Activated CD4-positive, alpha-beta memory T cell treated with anti-CD3 and anti-CD28 coated beads, Interleukin-2, amount 10 ng/mL, durations not matched to agents 7 days and 5 days (primary cell): ENCODE measurements at regions of chr4 and their contacts with region 1.

Region 1: GRCh38 chr4:2934813-2935761 is 28.1 kb downstream of the NOP14 start:
- DNase-seq: peak; percentile 96
- H3K4me3 Mint-ChIP-seq: peak overlapping the region; percentile 88
- H3K27ac Mint-ChIP-seq: peak overlapping the region; percentile 98
- H3K4me1 Mint-ChIP-seq: peaks cover 63% of the 10 kb centered on the region
- H3K27me3 Mint-ChIP-seq: no peaks in the 10 kb centered on the region

Region 2: DNA sequence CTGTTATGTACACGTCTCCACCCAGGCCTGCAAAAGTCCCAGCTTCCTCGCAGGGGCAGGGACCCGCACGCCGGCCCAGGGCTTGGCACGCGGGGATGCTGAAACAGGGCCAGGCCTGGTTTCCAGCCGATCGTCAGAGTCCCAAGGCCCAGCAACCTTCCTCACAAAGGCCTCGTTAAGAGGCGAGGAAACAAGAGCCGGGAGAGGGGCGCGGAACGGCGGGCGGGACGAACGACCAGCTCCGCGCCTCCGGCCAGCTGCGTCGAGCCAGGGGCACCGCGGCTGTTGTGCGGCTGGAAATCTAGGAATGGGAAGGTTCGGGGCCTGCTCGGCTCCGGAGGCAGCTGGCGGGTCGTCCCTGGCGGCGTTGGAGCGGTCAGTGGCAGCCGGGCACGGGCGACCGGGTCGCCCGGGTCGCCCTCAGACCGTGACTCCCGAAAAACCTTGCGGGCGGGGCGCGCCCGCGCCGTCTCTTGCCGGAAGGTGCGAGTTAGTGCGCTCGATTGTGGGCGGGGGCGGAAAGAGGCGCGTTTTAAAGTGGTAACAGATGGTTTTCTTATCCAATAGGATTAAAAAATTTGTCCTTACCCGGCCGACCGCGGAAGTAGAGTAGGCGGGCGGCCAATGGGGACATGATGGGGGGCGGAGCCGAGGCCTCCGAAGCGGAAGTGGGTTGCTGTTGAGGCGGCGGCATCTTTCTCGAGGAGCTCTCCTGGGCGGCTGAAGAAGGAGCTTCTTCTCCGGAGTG is 466.5 kb before region 1 on chr4 and contains the start of gene RNF4:
- CTCF ChIA-PET with region 1: no interaction called
- POLR2A ChIA-PET with region 1: interaction called, 11 read pairs
- DNase-seq: peak; percentile 97
- H3K4me3 Mint-ChIP-seq: peak within 1 kb of the TSS; percentile 97
- H3K27ac Mint-ChIP-seq: peak within 1 kb of the TSS; percentile 98
- H3K4me1 Mint-ChIP-seq: peaks cover 52% of the 10 kb centered on the region
- H3K27me3 Mint-ChIP-seq: peaks cover 2% of the 10 kb centered on the region
- total RNA-seq, gene RNF4: 106 to 113 TPM

Region 3: DNA sequence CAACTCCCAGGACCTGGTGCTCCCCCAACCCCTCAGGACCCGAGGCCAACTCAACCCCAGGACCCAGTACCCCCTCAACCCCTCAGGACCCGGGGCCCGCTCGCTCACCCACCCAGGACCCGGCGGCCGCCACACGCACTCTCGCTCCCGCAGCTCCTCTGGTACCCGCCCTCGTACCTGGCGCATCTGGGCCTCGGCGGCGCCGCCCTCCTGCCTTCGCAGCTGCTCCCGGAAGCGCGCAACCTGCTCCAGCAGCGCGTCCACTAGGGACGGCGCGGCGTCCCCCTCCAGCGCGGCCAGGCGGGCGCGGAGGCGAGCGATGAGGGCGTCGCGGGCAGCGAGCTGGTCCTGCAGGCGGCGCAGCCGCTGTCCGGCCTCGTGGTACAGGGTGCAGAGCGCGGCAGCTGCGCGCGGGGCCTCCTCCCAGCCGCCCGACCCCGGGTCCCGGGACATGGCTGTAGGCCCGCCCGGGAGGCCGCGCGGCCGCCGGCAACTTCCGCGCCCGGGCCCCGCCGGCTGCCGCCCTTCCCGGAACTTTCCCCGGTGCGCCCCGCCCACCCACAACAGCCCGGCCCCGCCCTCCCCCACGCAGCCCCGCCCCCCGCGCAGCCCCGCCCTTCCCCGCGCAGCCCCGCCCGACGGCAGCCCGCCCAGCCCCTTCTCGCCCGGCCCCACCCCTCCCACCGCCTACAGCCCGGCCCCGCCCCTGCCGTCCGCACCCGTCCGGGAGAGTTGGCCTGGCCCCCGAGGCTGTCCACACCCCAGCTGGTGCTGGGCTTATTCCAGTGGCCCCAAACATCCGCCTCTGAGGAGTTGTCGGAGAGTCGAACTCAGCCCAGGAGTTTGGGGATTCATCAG is 179.0 kb before region 1 on chr4 and contains the start of gene TNIP2:
- CTCF ChIA-PET with region 1: interaction called, 3 read pairs
- POLR2A ChIA-PET with region 1: interaction called, 30 read pairs
- DNase-seq: peak; percentile 82
- H3K4me3 Mint-ChIP-seq: peak within 1 kb of the TSS; percentile 79
- H3K27ac Mint-ChIP-seq: peak within 1 kb of the TSS; percentile 72
- H3K4me1 Mint-ChIP-seq: peaks cover 32% of the 10 kb centered on the region
- H3K27me3 Mint-ChIP-seq: no peaks in the 10 kb centered on the region
- total RNA-seq, gene TNIP2: 56.1 to 58.4 TPM

Region 4: GRCh38 chr4:2800691-2801596 is 134.1 kb before region 1 on chr4:
- CTCF ChIA-PET with region 1: interaction called, 4 read pairs
- POLR2A ChIA-PET with region 1: interaction called, 25 read pairs
- DNase-seq: no peak
- H3K4me3 Mint-ChIP-seq: peak overlapping the region; percentile 65
- H3K27ac Mint-ChIP-seq: no peak overlapping the region
- H3K4me1 Mint-ChIP-seq: peaks cover 50% of the 10 kb centered on the region
- H3K27me3 Mint-ChIP-seq: no peaks in the 10 kb centered on the region

Region 5: DNA sequence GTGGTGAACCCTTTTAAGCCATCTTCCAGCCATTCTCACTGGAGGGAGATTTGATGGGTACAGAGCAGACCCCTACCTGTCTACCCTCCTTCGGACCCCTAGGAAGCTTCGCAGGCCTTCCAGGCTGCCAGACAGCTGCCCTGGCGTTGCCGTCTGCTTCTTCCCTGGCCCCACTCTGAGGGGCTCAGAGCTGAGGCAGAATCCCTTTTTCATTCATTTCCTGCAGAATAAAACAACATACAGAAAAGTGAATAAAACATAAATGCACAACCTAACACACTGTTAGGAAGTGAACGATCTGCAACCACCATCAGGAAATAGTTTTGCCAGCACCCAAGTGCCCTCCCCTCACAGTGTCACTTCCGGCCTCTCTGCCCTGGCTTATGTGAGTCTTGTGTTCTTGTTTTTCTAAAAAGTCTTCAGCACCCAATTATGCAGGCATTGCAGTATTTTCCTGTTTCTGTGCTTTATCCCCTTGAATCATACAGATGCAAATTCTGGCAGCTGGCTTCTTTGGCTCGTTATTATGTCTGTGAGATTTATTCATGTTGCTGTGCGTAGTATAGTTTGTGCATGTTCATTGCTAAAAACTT is 97.1 kb before region 1 on chr4:
- CTCF ChIA-PET with region 1: interaction called, 4 read pairs
- POLR2A ChIA-PET with region 1: interaction called, 35 read pairs
- DNase-seq: peak; percentile 84
- H3K4me3 Mint-ChIP-seq: peak overlapping the region; percentile 75
- H3K27ac Mint-ChIP-seq: peak overlapping the region; percentile 93
- H3K4me1 Mint-ChIP-seq: peaks cover 75% of the 10 kb centered on the region
- H3K27me3 Mint-ChIP-seq: no peaks in the 10 kb centered on the region

Region 6: DNA sequence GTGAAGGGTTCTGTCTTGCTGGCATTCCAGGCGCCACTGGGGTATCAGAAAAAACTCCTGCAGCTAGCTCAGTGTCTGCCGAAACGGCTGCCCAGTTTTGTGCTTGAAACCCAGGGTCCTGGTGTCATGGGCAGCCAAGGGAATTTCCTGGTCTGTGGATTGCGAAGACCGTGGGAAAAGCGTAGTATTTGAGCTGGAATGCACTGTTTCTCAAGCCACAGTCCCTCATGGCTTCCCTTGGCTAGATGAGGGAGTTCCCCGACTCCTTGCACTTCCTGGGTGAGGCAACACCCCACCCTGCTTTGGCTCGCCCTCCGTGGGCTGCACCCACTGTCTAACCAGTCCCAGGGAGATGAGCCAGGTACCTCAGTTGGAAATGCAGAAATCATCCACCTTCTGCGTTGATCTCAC is 11.9 kb before region 1 on chr4:
- CTCF ChIA-PET with region 1: interaction called, 5 read pairs
- POLR2A ChIA-PET with region 1: interaction called, 22 read pairs
- DNase-seq: no peak
- H3K4me3 Mint-ChIP-seq: no peak overlapping the region
- H3K27ac Mint-ChIP-seq: peak overlapping the region; percentile 75
- H3K4me1 Mint-ChIP-seq: peaks cover 37% of the 10 kb centered on the region
- H3K27me3 Mint-ChIP-seq: no peaks in the 10 kb centered on the region

Region 7: DNA sequence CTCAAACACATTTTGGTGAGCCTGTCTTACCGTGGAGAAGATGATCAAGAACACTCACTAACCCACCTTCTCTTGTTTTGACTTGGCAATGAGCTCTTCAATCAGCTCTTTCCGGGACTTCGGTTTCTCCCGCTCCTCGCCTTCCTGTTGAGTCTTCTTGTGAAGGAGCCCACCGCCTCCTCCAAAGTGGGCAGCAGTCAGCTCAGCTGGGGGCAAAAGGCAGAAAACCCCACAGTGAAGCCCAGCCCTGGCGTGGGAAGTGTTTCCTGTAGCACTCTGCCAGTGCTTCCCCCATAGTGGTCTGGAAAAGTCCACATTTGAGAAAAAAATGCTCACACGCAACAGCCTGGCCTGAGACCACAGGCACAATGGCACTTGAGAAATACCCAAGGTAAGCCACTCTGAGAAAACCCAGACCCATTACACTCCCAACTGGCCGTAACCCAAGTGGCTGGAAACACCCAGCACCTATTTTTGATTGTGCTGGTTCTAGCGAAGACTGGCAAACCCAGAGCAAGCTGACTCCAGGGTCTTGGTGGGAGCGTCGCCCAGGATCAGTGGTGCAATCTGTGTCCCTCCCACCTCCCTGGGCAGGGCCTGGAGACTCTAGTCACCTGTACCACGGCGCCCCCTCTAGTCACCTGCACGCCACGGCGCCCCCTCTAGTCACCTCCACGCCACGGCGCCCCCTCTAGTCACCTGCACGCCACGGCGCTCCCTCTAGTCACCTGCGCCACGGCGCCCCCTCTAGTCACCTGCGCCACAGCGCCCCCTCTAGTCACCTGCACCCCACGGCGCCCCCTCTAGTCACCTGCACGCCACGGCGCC is 19.5 kb after region 1 on chr4:
- CTCF ChIA-PET with region 1: interaction called, 64 read pairs
- POLR2A ChIA-PET with region 1: interaction called, 95 read pairs
- DNase-seq: peak; percentile 63
- H3K4me3 Mint-ChIP-seq: peak overlapping the region; percentile 44
- H3K27ac Mint-ChIP-seq: peak overlapping the region; percentile 93
- H3K4me1 Mint-ChIP-seq: peaks cover 59% of the 10 kb centered on the region
- H3K27me3 Mint-ChIP-seq: no peaks in the 10 kb centered on the region

Region 8: GRCh38 chr4:3324093-3324815 is 389.2 kb after region 1 on chr4:
- CTCF ChIA-PET with region 1: no interaction called
- POLR2A ChIA-PET with region 1: no interaction called
- DNase-seq: peak; percentile 12
- H3K4me3 Mint-ChIP-seq: no peak overlapping the region
- H3K27ac Mint-ChIP-seq: no peak overlapping the region
- H3K4me1 Mint-ChIP-seq: no peaks in the 10 kb centered on the region
- H3K27me3 Mint-ChIP-seq: peaks cover 6% of the 10 kb centered on the region

Region 9: DNA sequence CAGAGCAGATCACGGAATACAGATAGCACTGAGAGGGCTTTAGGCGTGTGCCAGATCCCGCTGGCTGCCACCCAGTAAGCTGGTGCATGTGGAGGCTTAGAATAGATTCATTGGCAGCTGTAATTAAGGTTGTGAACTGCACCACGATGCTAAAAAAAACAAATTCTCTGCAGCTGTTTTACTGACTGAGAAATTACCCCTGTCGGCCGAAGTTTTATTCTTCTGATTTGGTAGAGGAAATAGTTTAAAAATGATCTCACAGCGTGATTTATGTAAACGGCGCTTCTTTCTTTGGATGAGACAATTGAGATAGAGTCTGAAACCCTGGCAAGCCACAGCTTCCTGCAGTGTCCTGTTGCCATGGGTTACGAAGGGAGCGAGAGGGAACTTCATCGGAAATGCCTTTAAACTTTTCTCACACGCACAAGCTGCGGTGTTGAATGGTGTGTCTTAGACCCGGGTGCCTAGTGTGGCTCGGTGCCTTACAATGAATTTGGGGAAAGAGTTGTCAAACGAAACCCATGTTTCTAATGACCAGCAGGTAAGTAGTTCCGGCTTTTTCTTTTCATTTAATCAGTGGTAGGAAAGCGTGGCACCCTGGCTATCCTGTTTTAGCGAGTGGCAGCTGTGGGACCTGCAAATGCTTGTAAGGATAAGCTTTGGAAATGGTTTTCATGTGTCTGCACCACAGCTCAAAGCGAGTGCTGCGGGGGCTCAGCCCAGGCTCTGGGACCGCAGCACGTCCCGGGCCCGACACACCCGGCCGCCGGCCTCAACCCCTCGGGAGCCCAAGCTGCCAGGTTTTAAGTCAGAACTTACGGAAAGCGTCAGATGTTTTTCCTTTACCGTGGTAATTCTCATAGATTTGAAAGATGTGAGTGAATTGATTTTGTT is 434.9 kb after region 1 on chr4:
- CTCF ChIA-PET with region 1: no interaction called
- POLR2A ChIA-PET with region 1: no interaction called
- DNase-seq: peak; percentile 46
- H3K4me3 Mint-ChIP-seq: peak overlapping the region; percentile 11
- H3K27ac Mint-ChIP-seq: no peak overlapping the region
- H3K4me1 Mint-ChIP-seq: peaks cover 34% of the 10 kb centered on the region
- H3K27me3 Mint-ChIP-seq: peaks cover 29% of the 10 kb centered on the region